ENCODE measurements at regions of chr1 and their contacts with region 1.

Region 1: GRCh38 chr1:20640183-20640597 is 6.9 kb downstream of the PINK1 start:
- DNase-seq: no peak
- H3K4me3 ChIP-seq: no peak overlapping the region
- H3K27ac ChIP-seq: no peak overlapping the region
- H3K4me1 ChIP-seq: peaks cover under 1 to 9% (median 5%) of the 10 kb centered on the region in 3 donors
- H3K27me3 ChIP-seq: no peaks in the 10 kb centered on the region
- CTCF ChIP-seq: peak; percentile 66 to 85 (median 76)
- POLR2A ChIP-seq: no peak

Region 2: DNA sequence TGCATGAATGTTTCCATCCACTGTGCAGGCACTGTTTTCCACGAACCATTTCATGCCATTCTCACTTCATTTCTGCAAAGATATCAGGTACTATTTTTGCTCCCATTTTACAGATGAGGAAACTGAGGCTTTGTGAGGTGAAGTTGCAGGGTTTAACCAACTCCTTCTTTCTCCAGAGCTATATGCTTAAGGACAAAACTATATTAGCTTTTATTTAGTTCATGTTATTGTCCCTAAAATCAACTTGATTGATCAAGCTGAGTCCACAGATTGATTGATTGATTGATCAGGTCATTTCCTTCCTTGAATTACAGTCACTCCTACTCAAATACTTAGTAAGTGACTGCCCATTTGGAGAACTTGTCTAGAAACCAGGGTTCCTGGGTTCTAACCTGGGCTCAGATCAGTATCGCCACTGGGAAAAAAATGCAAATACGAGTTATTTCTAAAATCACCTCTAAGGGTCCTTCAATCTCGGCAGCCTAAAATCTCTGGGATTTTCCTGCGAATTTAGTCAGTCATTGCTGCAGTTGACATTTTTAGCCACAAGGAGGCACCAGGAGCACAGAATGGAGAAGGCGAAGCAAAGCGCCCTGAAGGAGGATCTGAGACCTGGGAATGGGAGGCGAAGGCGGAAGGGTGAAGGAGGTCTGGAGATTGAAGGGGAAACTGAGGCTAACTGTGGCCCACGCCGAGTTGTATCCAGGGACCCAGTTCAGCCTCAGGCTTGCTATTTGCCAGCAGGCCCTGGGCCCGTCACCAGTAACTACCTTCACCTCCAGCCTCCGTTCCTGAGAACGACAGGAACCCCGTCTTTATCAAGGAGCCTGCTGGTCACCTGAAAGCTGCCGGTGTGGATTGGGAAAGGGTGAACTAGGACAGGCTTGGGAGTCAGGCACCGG is 118.0 kb before region 1 on chr1:
- intact Hi-C with region 1: loop called (anchors 5 kb)
- DNase-seq: no peak
- H3K4me3 ChIP-seq: peak overlapping the region in 2 of 4 donors; percentile 8 to 41
- H3K27ac ChIP-seq: no peak overlapping the region
- H3K4me1 ChIP-seq: peaks cover 0 to 7% (median 0%) of the 10 kb centered on the region in 3 donors
- H3K27me3 ChIP-seq: peaks cover 0 to 6% (median 0%) of the 10 kb centered on the region in 4 donors
- CTCF ChIP-seq: peak; percentile 75 to 95 (median 92)
- POLR2A ChIP-seq: no peak

Measured in esophagus squamous epithelium (tissue), 5 donors.